CD8-positive, alpha-beta T cell (primary cell): ENCODE measurements at regions of chr2 and their contacts with region 1.

Region 1: GRCh38 chr2:9618410-9618809 is 12.4 kb downstream of the YWHAQ start:
- DNase-seq: peak in 6 of 9 experiments; percentile 16 to 78 (median 52)
- ATAC-seq: peak; percentile 96
- H3K4me3 ChIP-seq: no peak overlapping the region
- H3K4me3 Mint-ChIP-seq: peak overlapping the region; percentile 78
- H3K27ac ChIP-seq: peak overlapping the region; percentile 38 to 73
- H3K27ac Mint-ChIP-seq: peak overlapping the region; percentile 97
- H3K4me1 ChIP-seq: peaks cover 50% of the 10 kb centered on the region
- H3K4me1 Mint-ChIP-seq: peaks cover 94% of the 10 kb centered on the region
- H3K27me3 ChIP-seq: no peaks in the 10 kb centered on the region
- H3K27me3 Mint-ChIP-seq: no peaks in the 10 kb centered on the region
- CTCF ChIP-seq: no peak

Region 2: DNA sequence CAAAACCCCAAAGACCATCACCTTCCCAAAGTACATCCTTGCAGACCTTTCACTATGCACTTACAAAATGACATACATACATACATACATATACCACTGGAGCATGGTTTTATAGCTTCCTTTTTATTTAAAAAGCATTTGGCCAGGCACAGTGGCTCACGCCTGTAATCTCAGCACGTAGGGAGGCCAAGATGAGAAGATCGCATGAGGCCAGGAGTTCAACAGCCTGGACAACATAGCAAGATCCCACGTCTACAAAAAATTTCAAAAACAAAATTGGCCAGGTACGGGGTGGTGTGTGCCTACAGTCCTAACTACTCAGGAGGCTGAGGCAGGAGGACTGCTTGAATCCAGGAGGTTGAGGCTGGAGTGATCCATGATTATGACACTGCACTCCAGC is 32.9 kb before region 1 on chr2:
- CTCF ChIA-PET with region 1: interaction called, 3 read pairs
- POLR2A ChIA-PET with region 1: no interaction called
- intact Hi-C with region 1: loop called in 1 of 2 experiments (anchors 5 kb)
- DNase-seq: no peak
- ATAC-seq: no peak
- H3K4me3 ChIP-seq: no peak overlapping the region
- H3K4me3 Mint-ChIP-seq: no peak overlapping the region
- H3K27ac ChIP-seq: no peak overlapping the region
- H3K27ac Mint-ChIP-seq: no peak overlapping the region
- H3K4me1 ChIP-seq: no peaks in the 10 kb centered on the region
- H3K4me1 Mint-ChIP-seq: peaks cover 3% of the 10 kb centered on the region
- H3K27me3 ChIP-seq: no peaks in the 10 kb centered on the region
- H3K27me3 Mint-ChIP-seq: no peaks in the 10 kb centered on the region
- CTCF ChIP-seq: no peak